HepG2 (cell line): ENCODE measurements at regions of chr4 and their contacts with region 1.

Region 1: DNA sequence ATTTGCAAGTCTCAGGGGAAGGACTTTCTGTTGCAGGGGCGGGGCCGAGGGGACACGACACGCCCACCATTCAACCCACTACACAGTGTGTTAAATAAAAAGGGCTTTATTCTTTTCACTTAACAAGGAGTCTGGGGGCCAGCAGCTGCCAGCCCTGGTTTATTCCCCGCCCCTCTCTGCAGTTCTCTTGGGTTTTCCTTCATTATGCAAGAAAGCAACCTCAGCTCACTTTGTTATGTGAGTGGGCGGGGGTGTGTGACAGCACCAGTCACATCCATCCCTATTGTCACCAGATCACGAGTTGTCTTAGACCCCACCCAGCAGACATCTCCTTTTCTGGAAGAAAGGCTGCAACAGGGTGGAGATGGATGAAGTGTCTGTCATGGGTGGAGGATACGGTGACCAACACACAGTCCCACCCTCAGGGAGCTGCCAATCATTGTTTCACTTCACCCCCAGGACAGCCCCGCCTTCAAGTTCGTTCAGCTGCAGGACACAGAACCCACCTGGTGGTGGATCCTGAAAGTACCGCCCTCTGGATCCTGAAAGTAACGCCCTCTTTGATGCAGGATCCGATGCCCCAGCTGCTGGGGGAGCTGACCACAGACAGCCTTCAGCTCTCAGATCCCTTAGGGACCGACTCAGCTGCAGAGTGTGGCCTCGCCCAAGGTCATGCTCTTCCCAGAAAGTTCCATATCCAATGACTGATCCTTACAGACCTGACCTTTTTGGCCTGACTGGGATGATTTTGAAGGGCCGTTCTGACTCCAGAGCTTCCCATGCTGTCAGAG is 79.6 kb downstream of the SMIM20 start:
- DNase-seq: peak; percentile 35
- ATAC-seq: peak; percentile 91
- H3K4me3 ChIP-seq: no peak overlapping the region
- H3K27ac ChIP-seq: no peak overlapping the region
- H3K4me1 ChIP-seq: no peaks in the 10 kb centered on the region
- H3K27me3 ChIP-seq: no peaks in the 10 kb centered on the region
- CTCF ChIP-seq: peak; percentile 60
- EP300 ChIP-seq: no peak
- POLR2A ChIP-seq: no peak
- RAD21 ChIP-seq: peak; percentile 37; the same call in 1 of the 2 replicates

Region 2: GRCh38 chr4:25925486-25926201 is 67.9 kb before region 1 on chr4:
- CTCF ChIA-PET with region 1: interaction called, 4 read pairs
- POLR2A ChIA-PET with region 1: no interaction called
- in situ Hi-C with region 1: no loop called
- intact Hi-C with region 1: loop called (anchors 5 kb)
- DNase-seq: peak; percentile 36
- ATAC-seq: peak; percentile 73
- H3K4me3 ChIP-seq: no peak overlapping the region
- H3K27ac ChIP-seq: no peak overlapping the region
- H3K4me1 ChIP-seq: peaks cover 17% of the 10 kb centered on the region
- H3K27me3 ChIP-seq: no peaks in the 10 kb centered on the region
- CTCF ChIP-seq: peak; percentile 59
- EP300 ChIP-seq: no peak
- POLR2A ChIP-seq: no peak
- RAD21 ChIP-seq: peak; percentile 61; the same call in 1 of the 2 replicates

Region 3: DNA sequence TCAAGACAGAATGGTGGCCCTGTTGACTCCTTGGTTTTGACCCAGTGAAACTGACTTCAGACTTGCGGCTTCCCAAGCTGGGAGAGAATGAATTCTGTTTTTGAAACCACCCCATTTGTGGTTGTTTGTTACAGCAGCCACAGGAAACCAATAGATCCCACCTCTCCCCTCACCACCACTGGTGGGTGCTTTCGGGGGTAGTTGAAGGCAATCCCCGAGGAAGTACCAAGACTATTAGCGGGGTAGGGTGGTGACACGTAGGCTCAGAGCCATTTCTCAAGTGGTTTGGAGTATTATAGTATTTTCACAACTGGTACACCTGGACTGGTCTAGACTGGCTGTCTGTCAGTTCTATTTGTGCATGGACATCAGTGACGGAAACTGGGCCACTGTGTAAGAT is 138.1 kb after region 1 on chr4:
- CTCF ChIA-PET with region 1: no interaction called
- POLR2A ChIA-PET with region 1: no interaction called
- in situ Hi-C with region 1: no loop called
- intact Hi-C with region 1: no loop called
- DNase-seq: no peak
- ATAC-seq: no peak
- H3K4me3 ChIP-seq: no peak overlapping the region
- H3K27ac ChIP-seq: no peak overlapping the region
- H3K4me1 ChIP-seq: no peaks in the 10 kb centered on the region
- H3K27me3 ChIP-seq: no peaks in the 10 kb centered on the region
- CTCF ChIP-seq: no peak
- EP300 ChIP-seq: no peak
- POLR2A ChIP-seq: no peak
- RAD21 ChIP-seq: no peak